ENCODE measurements at regions of chr5 and their contacts with region 1.

Region 1: GRCh38 chr5:130323804-130324454 is 419.7 kb downstream of the CHSY3 start:
- DNase-seq: no peak
- ATAC-seq: peak; percentile 85
- H3K4me3 Mint-ChIP-seq: peak overlapping the region; percentile 4
- H3K27ac Mint-ChIP-seq: peak overlapping the region; percentile 18
- H3K4me1 Mint-ChIP-seq: peaks cover 16% of the 10 kb centered on the region
- H3K27me3 Mint-ChIP-seq: no peaks in the 10 kb centered on the region
- CTCF ChIP-seq: no peak

Region 2: DNA sequence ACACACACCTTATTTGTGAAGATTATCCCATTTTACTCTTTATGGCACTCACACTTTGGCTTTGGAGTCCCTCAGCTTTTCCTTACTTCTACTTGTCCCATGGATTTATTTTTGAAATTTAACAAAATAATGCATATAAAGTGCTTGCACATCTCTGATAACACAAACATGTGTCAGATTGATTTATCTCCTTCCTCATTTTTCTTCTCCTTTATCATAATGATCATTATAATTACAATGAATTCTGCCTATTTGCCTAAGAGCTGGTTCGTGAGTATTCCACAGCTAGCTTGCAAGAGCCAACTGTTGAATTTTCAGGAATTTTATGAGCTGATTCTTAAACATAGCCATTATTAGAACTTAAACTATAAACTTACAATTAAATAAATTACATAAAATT is 72.0 kb before region 1 on chr5:
- CTCF ChIA-PET with region 1: no interaction called
- POLR2A ChIA-PET with region 1: no interaction called
- intact Hi-C with region 1: loop called (anchors 2 kb)
- DNase-seq: no peak
- ATAC-seq: no peak
- H3K4me3 Mint-ChIP-seq: no peak overlapping the region
- H3K27ac Mint-ChIP-seq: no peak overlapping the region
- H3K4me1 Mint-ChIP-seq: no peaks in the 10 kb centered on the region
- H3K27me3 Mint-ChIP-seq: no peaks in the 10 kb centered on the region
- CTCF ChIP-seq: no peak

Region 3: GRCh38 chr5:130496215-130496614 is 172.3 kb after region 1 on chr5:
- CTCF ChIA-PET with region 1: no interaction called
- POLR2A ChIA-PET with region 1: no interaction called
- intact Hi-C with region 1: no loop called
- DNase-seq: no peak
- ATAC-seq: no peak
- H3K4me3 Mint-ChIP-seq: no peak overlapping the region
- H3K27ac Mint-ChIP-seq: no peak overlapping the region
- H3K4me1 Mint-ChIP-seq: no peaks in the 10 kb centered on the region
- H3K27me3 Mint-ChIP-seq: no peaks in the 10 kb centered on the region
- CTCF ChIP-seq: no peak

Measured in activated B cell treated with CpG ODN at 0.5 μM for 24 hours (primary cell).